GM12878 (cell line): ENCODE measurements at regions of chr11 and their contacts with region 1.

Region 1: DNA sequence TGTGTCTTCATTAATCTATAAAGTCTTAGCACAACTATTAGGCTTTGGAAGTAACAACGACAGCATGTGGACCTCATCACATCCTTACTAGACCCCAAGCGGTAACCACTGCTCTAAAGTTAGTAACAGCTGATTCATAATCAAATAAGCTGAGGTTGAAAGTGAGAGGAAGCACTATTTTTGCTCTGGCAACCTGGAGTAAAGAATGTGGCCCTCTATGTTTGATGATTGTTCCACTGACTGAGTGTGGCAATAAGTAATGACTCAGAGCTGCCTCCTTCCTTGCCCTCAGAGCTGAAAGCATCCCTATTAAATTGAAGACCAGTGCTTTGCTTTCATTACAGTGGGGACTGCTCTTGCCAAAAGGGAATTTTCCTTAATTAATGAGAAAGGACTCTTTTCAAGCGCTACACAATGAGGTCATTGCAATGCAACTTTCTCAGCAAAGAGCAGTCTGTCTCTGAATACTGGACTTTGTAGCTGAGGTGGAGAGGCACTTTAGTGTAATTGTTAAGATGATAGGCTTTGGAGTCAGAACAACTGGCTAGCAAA is 906.1 kb upstream of the RAG2 start:
- DNase-seq: peak; percentile 78
- ATAC-seq: peak; percentile 93
- H3K4me3 ChIP-seq: no peak overlapping the region; the same call in 1 of the 2 replicates
- H3K27ac ChIP-seq: peak overlapping the region; percentile 34; the same call in 1 of the 2 replicates
- H3K4me1 ChIP-seq: peaks cover 18% of the 10 kb centered on the region
- H3K27me3 ChIP-seq: no peaks in the 10 kb centered on the region
- CTCF ChIP-seq: no peak
- EP300 ChIP-seq: peak; percentile 96 to 98
- POLR2A ChIP-seq: no peak
- RAD21 ChIP-seq: 0 out of 2 replicates have a peak, but pooled peaks have one; percentile 7

Region 2: DNA sequence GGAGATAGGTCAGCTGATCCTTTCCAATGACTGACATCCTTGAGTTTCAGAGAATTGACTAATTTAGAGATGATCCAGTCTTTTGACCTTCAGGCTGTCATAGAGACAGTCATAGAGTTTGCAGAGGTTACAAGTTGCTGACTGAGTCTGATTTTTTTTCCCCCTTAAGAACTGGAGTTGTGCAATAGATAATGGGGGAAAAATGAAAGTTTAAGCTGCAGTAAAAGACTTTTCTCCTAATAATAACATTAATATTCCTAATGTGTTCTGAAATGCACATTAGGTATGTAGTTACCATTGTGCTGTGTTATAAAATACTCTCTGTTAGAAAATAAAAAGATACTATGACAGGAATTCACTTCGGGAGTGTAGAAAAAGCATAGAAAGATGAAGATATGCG is 29.2 kb before region 1 on chr11:
- CTCF ChIA-PET with region 1: no interaction called
- POLR2A ChIA-PET with region 1: no interaction called
- RAD21 ChIA-PET with region 1: no interaction called
- SMC1A ChIA-PET with region 1: no interaction called
- in situ Hi-C with region 1: no loop called
- intact Hi-C with region 1: loop called (anchors 2 kb)
- DNase-seq: no peak
- ATAC-seq: no peak
- H3K4me3 ChIP-seq: no peak overlapping the region
- H3K27ac ChIP-seq: no peak overlapping the region
- H3K4me1 ChIP-seq: no peaks in the 10 kb centered on the region
- H3K27me3 ChIP-seq: no peaks in the 10 kb centered on the region; a peak in 1 of 4 replicates
- CTCF ChIP-seq: no peak
- EP300 ChIP-seq: no peak
- POLR2A ChIP-seq: no peak
- RAD21 ChIP-seq: no peak

Region 3: DNA sequence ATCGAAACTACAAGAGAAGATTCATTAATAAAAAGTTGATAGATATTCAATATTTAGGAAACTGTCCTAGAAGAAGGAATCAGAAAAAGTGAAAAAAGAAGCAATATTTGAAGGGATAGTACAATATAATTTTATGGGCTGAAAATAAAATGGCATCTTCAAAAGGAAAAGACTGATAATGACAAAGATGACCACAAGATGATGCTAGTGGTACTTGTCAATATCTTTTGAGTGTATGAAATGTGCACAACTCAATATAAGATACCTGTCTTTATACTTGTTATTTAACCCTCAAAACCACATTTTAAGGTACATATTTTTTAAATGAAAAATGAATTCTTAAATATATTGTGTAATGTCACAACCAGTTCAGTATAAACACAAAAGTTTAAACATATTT is 153.5 kb after region 1 on chr11:
- CTCF ChIA-PET with region 1: no interaction called
- POLR2A ChIA-PET with region 1: no interaction called
- RAD21 ChIA-PET with region 1: no interaction called
- SMC1A ChIA-PET with region 1: no interaction called
- in situ Hi-C with region 1: no loop called
- intact Hi-C with region 1: no loop called
- DNase-seq: no peak
- ATAC-seq: no peak
- H3K4me3 ChIP-seq: no peak overlapping the region
- H3K27ac ChIP-seq: no peak overlapping the region
- H3K4me1 ChIP-seq: no peaks in the 10 kb centered on the region
- H3K27me3 ChIP-seq: no peaks in the 10 kb centered on the region
- CTCF ChIP-seq: no peak; a peak in 1 of 6 replicates
- EP300 ChIP-seq: no peak
- POLR2A ChIP-seq: no peak
- RAD21 ChIP-seq: no peak

Region 4: DNA sequence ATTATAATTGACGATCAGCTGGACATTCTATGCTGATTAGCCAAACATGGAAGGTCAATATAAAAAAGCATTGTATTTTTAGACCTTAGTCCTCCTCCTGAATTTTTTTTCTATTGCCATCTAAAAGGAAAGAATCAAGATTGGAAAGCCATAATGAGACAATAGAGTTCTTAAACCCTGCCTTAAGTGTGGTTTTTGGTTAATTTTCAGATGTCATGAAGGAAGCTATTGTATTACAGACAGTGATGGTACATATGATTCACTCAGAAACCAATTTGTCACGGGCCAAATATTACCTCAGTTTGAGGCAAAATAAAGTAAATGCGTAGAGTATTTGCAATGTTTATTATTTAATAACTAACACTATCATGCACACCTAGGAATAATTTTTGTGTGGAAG is 257.9 kb after region 1 on chr11:
- CTCF ChIA-PET with region 1: no interaction called
- POLR2A ChIA-PET with region 1: no interaction called
- RAD21 ChIA-PET with region 1: no interaction called
- SMC1A ChIA-PET with region 1: no interaction called
- in situ Hi-C with region 1: no loop called
- intact Hi-C with region 1: no loop called
- DNase-seq: no peak
- ATAC-seq: no peak
- H3K4me3 ChIP-seq: no peak overlapping the region
- H3K27ac ChIP-seq: no peak overlapping the region
- H3K4me1 ChIP-seq: no peaks in the 10 kb centered on the region
- H3K27me3 ChIP-seq: no peaks in the 10 kb centered on the region
- CTCF ChIP-seq: no peak
- EP300 ChIP-seq: no peak
- POLR2A ChIP-seq: no peak
- RAD21 ChIP-seq: no peak